Transverse colon (tissue), 4 donors: ENCODE measurements at regions of chr6 and their contacts with region 1.

Region 1: GRCh38 chr6:110484310-110484709 is 7.9 kb upstream of the SLC22A16 start:
- DNase-seq: no peak
- H3K4me3 ChIP-seq: no peak overlapping the region
- H3K27ac ChIP-seq: no peak overlapping the region
- H3K4me1 ChIP-seq: no peaks in the 10 kb centered on the region
- H3K27me3 ChIP-seq: no peaks in the 10 kb centered on the region
- CTCF ChIP-seq: no peak
- EP300 ChIP-seq: no peak
- POLR2A ChIP-seq: no peak

Region 2: GRCh38 chr6:110173506-110174132 is 310.7 kb before region 1 on chr6:
- in situ Hi-C with region 1: no loop called
- intact Hi-C with region 1: loop called (anchors 5 kb)
- DNase-seq: no peak
- H3K4me3 ChIP-seq: no peak overlapping the region
- H3K27ac ChIP-seq: no peak overlapping the region
- H3K4me1 ChIP-seq: peaks cover 4 to 8% (median 6%) of the 10 kb centered on the region in 4 donors
- H3K27me3 ChIP-seq: peaks cover 3% of the 10 kb centered on the region
- CTCF ChIP-seq: no peak
- EP300 ChIP-seq: no peak
- POLR2A ChIP-seq: no peak